Heart left ventricle (tissue), 16 donors: ENCODE measurements at regions of chr10 and their contacts with region 1.

Region 1: GRCh38 chr10:75070961-75071428 is 40.5 kb upstream of the SAMD8 start:
- DNase-seq: peak in 2 of 5 donors; percentile 57 to 69
- ATAC-seq: peak; percentile 12 to 65 (median 52)
- H3K4me3 ChIP-seq: no peak overlapping the region
- H3K27ac ChIP-seq: peak overlapping the region in 11 of 12 donors; percentile 60 to 94 (median 79)
- H3K4me1 ChIP-seq: peaks cover 0 to 17% (median 12%) of the 10 kb centered on the region in 12 donors
- H3K27me3 ChIP-seq: no peaks in the 10 kb centered on the region
- CTCF ChIP-seq: no peak
- POLR2A ChIP-seq: no peak

Region 2: GRCh38 chr10:74799721-74800221 is 271.2 kb before region 1 on chr10:
- intact Hi-C with region 1: no loop called
- DNase-seq: no peak
- ATAC-seq: no peak
- H3K4me3 ChIP-seq: no peak overlapping the region
- H3K27ac ChIP-seq: no peak overlapping the region
- H3K4me1 ChIP-seq: peaks cover 0 to 8% (median 0%) of the 10 kb centered on the region in 12 donors
- H3K27me3 ChIP-seq: no peaks in the 10 kb centered on the region
- CTCF ChIP-seq: no peak
- POLR2A ChIP-seq: no peak

Region 3: GRCh38 chr10:75029857-75030256 is 41.1 kb before region 1 on chr10:
- intact Hi-C with region 1: loop called in 2 of 10 experiments (anchors 1 to 5 kb)
- DNase-seq: peak in 2 of 5 donors; percentile 72 to 74
- ATAC-seq: peak; percentile 34 to 63 (median 52)
- H3K4me3 ChIP-seq: no peak overlapping the region
- H3K27ac ChIP-seq: no peak overlapping the region
- H3K4me1 ChIP-seq: peaks cover 0 to 16% (median 5%) of the 10 kb centered on the region in 12 donors
- H3K27me3 ChIP-seq: no peaks in the 10 kb centered on the region
- CTCF ChIP-seq: no peak
- POLR2A ChIP-seq: no peak

Region 4: GRCh38 chr10:75035975-75036708 is 34.9 kb before region 1 on chr10:
- intact Hi-C with region 1: loop called in 2 of 10 experiments (anchors 1 to 5 kb)
- DNase-seq: no peak
- ATAC-seq: peak in 1 of 4 donors; percentile 13
- H3K4me3 ChIP-seq: no peak overlapping the region
- H3K27ac ChIP-seq: no peak overlapping the region
- H3K4me1 ChIP-seq: peaks cover 0 to 33% (median 15%) of the 10 kb centered on the region in 12 donors
- H3K27me3 ChIP-seq: no peaks in the 10 kb centered on the region
- CTCF ChIP-seq: no peak
- POLR2A ChIP-seq: no peak

Region 5: DNA sequence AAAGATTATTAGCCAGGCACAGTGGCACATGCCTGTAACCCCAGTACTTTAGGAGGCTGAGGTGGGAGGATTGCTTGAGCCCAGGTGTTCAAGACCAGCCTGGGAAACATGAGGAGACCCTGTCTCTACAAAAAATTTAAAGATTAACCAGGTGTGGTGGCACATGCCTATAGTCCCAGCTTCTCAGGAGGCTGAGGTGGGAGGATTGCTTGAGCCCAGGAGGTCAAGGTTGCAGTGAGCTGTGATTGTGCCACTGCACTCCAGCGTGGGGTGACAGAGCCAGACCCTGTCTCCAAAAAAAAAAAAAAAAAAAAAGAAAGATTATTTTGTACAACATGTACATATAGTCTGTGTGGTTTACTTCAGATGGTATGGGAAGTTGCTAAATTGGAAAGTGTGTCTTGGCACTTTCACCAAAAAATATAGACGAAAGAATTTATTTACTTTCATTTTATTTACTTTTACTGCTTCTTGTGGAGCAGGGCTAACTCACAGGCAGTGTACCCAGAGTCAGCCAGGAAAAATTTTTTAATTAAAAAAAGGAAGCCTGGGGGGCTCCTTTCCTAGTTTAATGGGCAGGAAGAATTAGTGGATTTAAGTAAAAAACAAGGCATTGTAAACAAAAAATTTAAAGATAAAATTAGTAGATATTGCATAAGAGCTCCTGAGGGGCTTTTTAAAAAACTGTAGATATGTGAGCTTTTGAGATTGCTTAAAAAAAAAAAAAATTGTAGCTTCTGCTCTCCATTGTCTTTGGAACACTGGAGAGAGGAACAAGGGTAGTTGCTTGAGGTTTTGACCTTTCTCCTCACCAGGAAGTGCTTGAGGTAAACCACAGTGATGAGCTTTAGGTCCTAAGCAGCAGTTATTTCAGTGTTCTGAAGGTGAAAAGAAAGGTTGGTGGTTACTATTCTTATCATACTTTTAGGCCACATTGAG is 95.0 kb after region 1 on chr10:
- intact Hi-C with region 1: no loop called
- DNase-seq: no peak
- ATAC-seq: no peak
- H3K4me3 ChIP-seq: no peak overlapping the region
- H3K27ac ChIP-seq: peak overlapping the region in 2 of 12 donors; percentile 3 to 29
- H3K4me1 ChIP-seq: peaks cover 0 to 39% (median 15%) of the 10 kb centered on the region in 12 donors
- H3K27me3 ChIP-seq: no peaks in the 10 kb centered on the region
- CTCF ChIP-seq: no peak
- POLR2A ChIP-seq: no peak